H1 (cell line): ENCODE measurements at regions of chr5 and their contacts with region 1.

Region 1: GRCh38 chr5:56270568-56271392 is 37.6 kb upstream of the ANKRD55 start:
- DNase-seq: peak; percentile 73 to 92
- H3K4me3 ChIP-seq: no peak overlapping the region
- H3K27ac ChIP-seq: no peak overlapping the region
- H3K4me1 ChIP-seq: no peaks in the 10 kb centered on the region
- H3K27me3 ChIP-seq: no peaks in the 10 kb centered on the region
- CTCF ChIP-seq: peak; percentile 92 to 100 (median 97)
- EP300 ChIP-seq: no peak
- POLR2A ChIP-seq: no peak
- RAD21 ChIP-seq: peak; percentile 100

Region 2: GRCh38 chr5:56123531-56124243 is 147.1 kb before region 1 on chr5:
- CTCF ChIA-PET with region 1: no interaction called
- POLR2A ChIA-PET with region 1: no interaction called
- DNase-seq: peak; percentile 31 to 50
- H3K4me3 ChIP-seq: no peak overlapping the region
- H3K27ac ChIP-seq: no peak overlapping the region
- H3K4me1 ChIP-seq: no peaks in the 10 kb centered on the region
- H3K27me3 ChIP-seq: no peaks in the 10 kb centered on the region
- CTCF ChIP-seq: no peak
- EP300 ChIP-seq: no peak
- POLR2A ChIP-seq: no peak
- RAD21 ChIP-seq: no peak

Region 3: DNA sequence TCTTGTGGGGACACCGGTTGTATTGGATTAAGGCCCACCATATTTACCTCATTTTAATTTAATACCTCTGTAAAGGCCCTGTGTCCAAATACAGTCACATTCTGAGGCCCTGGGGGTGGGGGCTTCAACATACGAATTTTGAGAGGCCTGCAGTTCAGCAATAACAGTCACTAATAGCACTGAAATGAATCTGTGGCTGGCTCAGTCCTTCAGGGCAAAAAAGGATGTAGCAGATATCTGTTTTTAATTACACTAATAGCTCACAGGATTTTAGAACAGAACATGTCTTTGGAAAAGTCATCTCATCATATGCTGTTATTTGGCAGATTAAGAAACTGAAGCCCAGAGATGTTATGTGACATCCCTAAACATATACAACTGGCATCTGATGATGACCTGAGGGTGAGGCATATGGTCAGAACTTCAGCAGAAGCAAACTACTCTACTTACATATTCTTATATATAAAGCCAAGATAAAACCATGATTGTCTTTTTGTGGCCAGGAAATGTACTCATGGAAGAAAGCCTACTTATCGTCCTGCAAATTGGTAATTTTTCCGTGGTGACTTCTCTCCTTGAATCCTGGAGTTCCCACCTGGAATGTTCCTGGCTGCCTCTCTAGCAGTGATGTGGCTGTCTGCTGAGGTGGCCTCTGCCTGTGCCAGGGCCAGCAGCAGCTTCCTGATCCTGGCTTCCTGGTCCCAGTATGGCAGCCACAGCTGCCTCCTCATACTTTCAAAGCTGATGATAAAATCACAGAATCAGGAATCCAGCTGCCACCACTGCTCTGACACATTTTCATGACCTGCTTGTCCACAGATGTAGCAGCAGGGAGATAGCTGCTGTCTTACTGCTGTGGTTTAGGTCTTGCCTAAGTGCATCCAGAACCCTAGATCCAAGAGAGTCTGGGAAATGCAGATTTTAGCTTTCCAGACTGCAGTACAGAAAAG is 34.5 kb after region 1 on chr5:
- CTCF ChIA-PET with region 1: interaction called, 10 read pairs
- POLR2A ChIA-PET with region 1: no interaction called
- DNase-seq: no peak
- H3K4me3 ChIP-seq: no peak overlapping the region
- H3K27ac ChIP-seq: no peak overlapping the region
- H3K4me1 ChIP-seq: no peaks in the 10 kb centered on the region
- H3K27me3 ChIP-seq: no peaks in the 10 kb centered on the region
- CTCF ChIP-seq: no peak
- EP300 ChIP-seq: no peak
- POLR2A ChIP-seq: no peak
- RAD21 ChIP-seq: no peak

Region 4: DNA sequence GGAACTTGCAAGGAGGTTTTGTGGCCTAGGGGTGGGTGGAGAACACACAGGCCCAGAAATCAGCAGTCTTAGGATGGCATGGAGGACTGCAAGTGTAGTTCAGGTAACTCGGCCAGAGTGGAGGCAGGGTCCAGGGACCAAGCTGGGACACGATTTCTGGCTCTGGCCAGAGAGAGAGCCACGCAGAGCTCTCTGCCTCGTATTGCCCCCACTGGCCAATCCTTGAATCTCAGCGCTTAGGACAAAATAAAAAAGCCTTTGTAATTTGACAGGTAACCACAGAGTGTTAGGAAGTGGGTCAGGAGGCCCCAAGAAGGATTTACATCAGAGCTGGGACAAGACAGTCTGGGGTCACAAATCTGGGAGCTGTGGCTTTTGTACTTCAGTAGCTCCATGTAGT is 556.3 kb after region 1 on chr5:
- CTCF ChIA-PET with region 1: interaction called, 146 read pairs
- POLR2A ChIA-PET with region 1: no interaction called
- DNase-seq: no peak
- H3K4me3 ChIP-seq: no peak overlapping the region
- H3K27ac ChIP-seq: no peak overlapping the region
- H3K4me1 ChIP-seq: peaks cover 2 to 12% (median 8%) of the 10 kb centered on the region in 4 experiments; a peak in 4 of 7 replicates
- H3K27me3 ChIP-seq: no peaks in the 10 kb centered on the region
- CTCF ChIP-seq: peak; percentile 29 to 71 (median 48); a peak in 3 of 4 replicates
- EP300 ChIP-seq: no peak
- POLR2A ChIP-seq: no peak
- RAD21 ChIP-seq: peak; percentile 49 to 67

Region 5: DNA sequence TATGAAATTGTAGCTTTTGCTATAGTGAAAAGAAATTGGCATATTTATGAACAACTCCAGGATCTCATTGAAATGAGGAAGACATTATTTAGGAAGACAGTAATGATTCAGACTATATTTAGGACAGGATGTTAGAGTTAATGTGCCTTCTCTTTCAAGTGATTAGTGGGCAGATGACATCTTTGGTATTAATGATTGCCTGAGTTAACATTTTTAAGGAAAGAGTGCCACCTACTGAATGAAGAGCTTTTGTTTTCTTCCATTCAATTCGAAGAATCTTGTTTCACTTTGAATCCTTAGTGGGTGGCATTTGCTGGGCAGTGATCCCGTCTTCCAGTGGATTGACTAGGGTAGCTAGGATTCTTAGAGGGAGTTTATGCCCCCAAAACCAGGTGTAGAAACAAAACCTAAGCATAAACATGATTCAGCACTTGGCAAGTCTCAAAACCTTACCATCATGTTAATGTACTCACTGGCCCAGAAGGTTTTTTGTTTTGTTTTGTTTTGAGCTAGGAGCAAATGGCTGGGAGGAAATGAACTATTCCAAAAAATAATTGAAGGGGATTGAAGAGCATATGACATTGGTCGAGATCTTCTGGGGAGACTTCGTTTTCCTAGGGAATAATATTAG is 567.7 kb after region 1 on chr5:
- CTCF ChIA-PET with region 1: interaction called, 146 read pairs
- POLR2A ChIA-PET with region 1: interaction called, 9 read pairs
- DNase-seq: no peak
- H3K4me3 ChIP-seq: no peak overlapping the region
- H3K27ac ChIP-seq: no peak overlapping the region
- H3K4me1 ChIP-seq: peaks cover 0 to 15% (median 3%) of the 10 kb centered on the region in 4 experiments; a peak in 3 of 7 replicates
- H3K27me3 ChIP-seq: no peaks in the 10 kb centered on the region
- CTCF ChIP-seq: peak in 2 of 3 experiments; percentile 26 to 49; a peak in 2 of 4 replicates
- EP300 ChIP-seq: no peak
- POLR2A ChIP-seq: no peak
- RAD21 ChIP-seq: peak; percentile 81 to 85

Region 6: DNA sequence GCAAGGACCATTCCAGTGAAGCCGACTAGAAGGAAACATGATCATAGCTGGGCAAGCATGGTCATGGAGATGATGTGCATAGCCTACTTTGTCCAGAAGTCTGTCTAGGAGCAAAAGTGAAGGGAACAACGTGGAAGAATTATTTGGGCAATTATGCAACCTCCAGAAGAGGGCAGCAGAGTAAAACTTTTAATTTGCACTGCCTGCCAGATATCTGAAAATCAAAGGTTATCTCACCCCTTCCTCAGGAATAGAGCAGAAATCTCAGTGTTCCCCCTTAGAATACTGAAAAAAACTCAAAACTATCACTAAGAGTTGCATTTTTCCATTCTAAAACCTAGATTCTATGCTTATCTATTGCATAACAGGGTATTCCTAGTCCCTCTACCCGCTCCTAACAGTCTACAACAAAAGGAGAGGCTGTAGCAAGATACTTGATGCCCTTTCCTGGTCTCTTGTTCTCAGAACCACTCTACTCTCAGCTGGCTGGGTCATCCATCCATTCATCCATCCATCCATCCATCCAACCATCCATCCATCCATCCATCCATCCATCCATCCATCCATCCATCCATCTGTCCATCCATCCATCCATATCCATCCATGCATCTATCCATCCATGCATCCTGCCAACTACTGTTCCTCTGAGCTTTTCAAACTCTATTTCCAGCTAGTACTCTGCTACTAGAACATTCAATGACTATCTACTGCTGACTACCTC is 630.2 kb after region 1 on chr5:
- CTCF ChIA-PET with region 1: interaction called, 22 read pairs
- POLR2A ChIA-PET with region 1: no interaction called
- DNase-seq: peak in 1 of 2 experiments; percentile 52
- H3K4me3 ChIP-seq: no peak overlapping the region
- H3K27ac ChIP-seq: no peak overlapping the region
- H3K4me1 ChIP-seq: no peaks in the 10 kb centered on the region
- H3K27me3 ChIP-seq: no peaks in the 10 kb centered on the region
- CTCF ChIP-seq: peak in 2 of 3 experiments; percentile 65 to 67; a peak in 3 of 4 replicates
- EP300 ChIP-seq: no peak
- POLR2A ChIP-seq: no peak
- RAD21 ChIP-seq: peak; percentile 86